Mammary epithelial cell (primary cell): ENCODE measurements at regions of chr3 and their contacts with region 1.

Region 1: DNA sequence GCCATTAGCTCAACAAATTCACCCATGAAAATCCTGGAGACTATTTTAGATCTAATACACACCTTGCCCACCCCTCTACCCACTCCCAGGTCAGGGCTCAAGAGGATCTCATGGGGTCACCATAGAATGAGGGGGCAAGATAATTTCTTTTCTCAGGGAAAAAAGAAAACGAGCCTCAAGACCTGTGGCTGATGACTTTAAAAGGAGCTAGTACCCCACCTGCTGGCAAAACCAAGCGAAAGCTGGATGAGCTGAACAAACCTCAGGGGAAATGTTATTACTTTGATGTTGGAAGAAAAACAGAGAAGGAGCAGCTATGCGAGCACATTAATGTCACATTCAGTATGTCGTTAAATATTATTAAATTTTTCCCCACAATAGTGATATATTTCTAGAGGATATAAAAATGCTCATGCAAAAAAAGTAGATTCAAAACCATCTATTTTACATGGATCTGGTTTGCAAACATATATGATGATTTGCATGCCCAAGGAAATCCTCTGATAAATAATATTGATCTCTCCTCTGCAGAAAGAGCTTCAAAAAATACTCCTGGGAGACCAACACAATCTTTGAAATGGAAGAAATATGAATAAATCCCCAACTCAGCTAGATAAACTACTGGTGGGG is 37.7 kb downstream of the PLD1 start:
- DNase-seq: peak; percentile 60
- H3K4me3 ChIP-seq: no peak overlapping the region
- H3K27ac ChIP-seq: peak overlapping the region; percentile 83
- H3K4me1 ChIP-seq: peaks cover 32% of the 10 kb centered on the region
- H3K27me3 ChIP-seq: no peaks in the 10 kb centered on the region
- CTCF ChIP-seq: peak; percentile 80 to 87

Region 2: DNA sequence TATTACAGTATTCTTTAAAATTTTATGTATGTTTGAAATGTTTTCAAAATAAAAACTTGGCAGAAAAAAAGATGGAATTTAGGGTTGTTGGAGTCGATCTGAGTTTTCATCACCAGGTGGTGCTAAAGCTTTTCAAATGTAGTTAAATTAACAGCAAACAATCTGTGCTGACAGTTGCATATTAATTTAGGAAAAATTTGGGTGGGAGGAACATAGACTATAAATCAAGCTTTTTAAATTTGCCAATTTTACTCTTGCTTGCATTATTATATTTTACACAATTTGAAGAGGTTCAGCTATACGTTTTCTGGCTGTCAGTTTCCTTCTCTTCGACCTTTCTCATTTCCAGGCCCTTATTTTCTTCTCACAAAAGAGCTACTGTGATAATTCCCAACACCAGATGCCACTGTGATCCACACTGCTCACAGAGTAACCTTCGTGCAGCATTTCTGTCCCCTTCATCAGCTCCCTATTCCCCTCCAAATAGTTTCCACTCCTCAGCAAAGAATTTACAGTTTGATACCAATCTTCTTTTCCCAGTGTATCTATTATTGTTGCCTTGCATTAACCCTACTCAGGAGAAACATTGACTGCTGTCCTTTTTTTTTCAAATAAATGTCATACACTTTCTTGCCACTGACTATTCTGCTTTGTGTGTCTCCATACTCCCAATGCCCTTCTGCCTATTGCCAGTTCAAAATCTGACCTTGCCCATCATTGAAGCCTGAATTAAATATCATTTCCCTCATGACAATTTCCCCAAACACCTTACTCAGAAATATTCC is 810.7 kb before region 1 on chr3:
- CTCF ChIA-PET with region 1: no interaction called
- dilution Hi-C with region 1: no loop called
- in situ Hi-C with region 1: no loop called
- intact Hi-C with region 1: loop called (anchors 5 kb)
- DNase-seq: peak; percentile 12
- H3K4me3 ChIP-seq: no peak overlapping the region
- H3K27ac ChIP-seq: no peak overlapping the region
- H3K4me1 ChIP-seq: no peaks in the 10 kb centered on the region
- H3K27me3 ChIP-seq: no peaks in the 10 kb centered on the region
- CTCF ChIP-seq: peak; percentile 49 to 58

Region 3: GRCh38 chr3:171566803-171567422 is 205.6 kb before region 1 on chr3:
- CTCF ChIA-PET with region 1: no interaction called
- dilution Hi-C with region 1: no loop called
- in situ Hi-C with region 1: no loop called
- intact Hi-C with region 1: loop called (anchors 5 kb)
- DNase-seq: peak; percentile 25
- H3K4me3 ChIP-seq: no peak overlapping the region
- H3K27ac ChIP-seq: no peak overlapping the region
- H3K4me1 ChIP-seq: no peaks in the 10 kb centered on the region
- H3K27me3 ChIP-seq: no peaks in the 10 kb centered on the region
- CTCF ChIP-seq: peak; percentile 65 to 74

Region 4: GRCh38 chr3:171654809-171655208 is 117.7 kb before region 1 on chr3:
- CTCF ChIA-PET with region 1: no interaction called
- dilution Hi-C with region 1: loop called (anchors 5 kb)
- in situ Hi-C with region 1: no loop called
- intact Hi-C with region 1: no loop called
- DNase-seq: peak; percentile 78
- H3K4me3 ChIP-seq: no peak overlapping the region
- H3K27ac ChIP-seq: peak overlapping the region; percentile 43
- H3K4me1 ChIP-seq: peaks cover 16% of the 10 kb centered on the region
- H3K27me3 ChIP-seq: no peaks in the 10 kb centered on the region
- CTCF ChIP-seq: no peak

Region 5: DNA sequence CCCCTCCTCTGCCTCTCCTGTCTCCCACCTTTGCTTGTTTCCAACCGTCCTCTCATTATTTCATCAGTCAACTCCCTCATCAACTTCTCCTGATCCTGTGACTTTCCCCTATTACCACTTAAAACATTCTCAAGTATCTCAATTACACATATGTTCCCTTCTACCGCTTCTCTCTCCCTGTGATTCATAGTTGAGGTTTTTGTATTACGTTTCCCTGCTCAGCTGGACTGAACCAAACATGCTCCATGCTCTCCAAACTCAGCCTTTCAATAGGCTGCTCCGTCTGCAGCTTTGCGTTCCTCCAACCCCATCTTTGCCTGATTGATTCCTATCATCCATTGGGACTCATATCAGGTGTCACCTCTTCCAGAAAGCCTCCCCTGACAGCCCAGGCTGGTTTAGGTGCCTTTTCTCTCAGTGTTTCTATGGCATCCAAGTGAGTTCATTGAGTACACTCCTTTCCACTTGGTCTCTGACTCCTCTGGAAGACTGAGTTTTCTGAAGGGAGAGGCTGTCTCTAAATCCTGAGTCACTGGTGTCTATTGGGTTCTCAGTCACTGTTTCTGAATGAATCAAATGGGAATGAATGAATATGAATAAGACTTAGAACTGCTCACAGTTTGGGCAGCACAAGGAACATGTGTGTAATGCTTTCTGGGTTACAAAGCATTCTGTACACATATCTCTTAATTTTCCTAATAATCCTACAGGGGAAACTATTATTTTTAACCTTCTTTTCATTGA is 18.7 kb before region 1 on chr3:
- CTCF ChIA-PET with region 1: no interaction called
- dilution Hi-C with region 1: no loop called
- in situ Hi-C with region 1: no loop called
- intact Hi-C with region 1: loop called (anchors 1 kb)
- DNase-seq: peak; percentile 95
- H3K4me3 ChIP-seq: peak overlapping the region in 1 of 3 experiments; percentile 9
- H3K27ac ChIP-seq: peak overlapping the region; percentile 94
- H3K4me1 ChIP-seq: peaks cover 40% of the 10 kb centered on the region
- H3K27me3 ChIP-seq: no peaks in the 10 kb centered on the region
- CTCF ChIP-seq: no peak